ENCODE measurements at regions of chr20 and their contacts with region 1.

Region 1: DNA sequence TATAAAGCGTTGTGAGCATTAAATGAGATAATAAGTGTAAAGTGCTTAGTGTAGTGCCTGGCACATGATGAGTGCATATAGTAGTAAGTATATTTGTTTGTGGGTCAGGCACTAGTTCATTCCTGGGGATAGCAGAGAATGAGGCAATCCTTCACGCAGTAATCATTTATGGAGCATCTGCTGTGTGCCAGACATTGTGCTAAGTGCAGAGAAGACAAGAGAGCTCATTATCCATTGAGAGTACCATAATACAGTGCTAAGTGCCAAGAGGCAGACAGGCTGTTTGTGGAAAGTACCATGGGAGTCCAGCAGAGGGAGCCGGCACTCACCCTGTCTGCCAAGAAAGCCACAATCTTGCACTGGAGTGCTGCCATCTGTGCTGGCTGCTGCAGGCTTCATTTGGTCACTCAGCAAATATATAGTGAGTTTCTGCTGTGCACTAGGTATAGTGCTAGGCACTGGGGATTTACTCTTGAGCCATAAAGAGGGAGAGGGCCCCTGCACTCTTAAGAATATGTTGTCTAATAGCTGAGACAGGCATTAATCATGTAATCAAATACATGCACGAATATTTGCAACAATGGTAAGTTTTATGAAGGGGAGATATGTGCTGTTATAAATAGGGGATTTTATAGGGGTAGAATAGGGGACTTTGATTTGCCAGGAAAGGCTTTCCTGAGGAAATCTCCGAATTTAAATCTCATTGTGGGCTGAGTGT is 12.9 kb upstream of the MROH8 start:
- DNase-seq: peak; percentile 78
- H3K4me3 ChIP-seq: no peak overlapping the region
- H3K27ac ChIP-seq: no peak overlapping the region
- H3K4me1 ChIP-seq: peaks cover 4 to 5% of the 10 kb centered on the region in 2 experiments; a peak in 2 of 4 replicates
- H3K27me3 ChIP-seq: no peaks in the 10 kb centered on the region
- CTCF ChIP-seq: peak; percentile 85
- EP300 ChIP-seq: no peak
- RAD21 ChIP-seq: peak; percentile 71

Region 2: DNA sequence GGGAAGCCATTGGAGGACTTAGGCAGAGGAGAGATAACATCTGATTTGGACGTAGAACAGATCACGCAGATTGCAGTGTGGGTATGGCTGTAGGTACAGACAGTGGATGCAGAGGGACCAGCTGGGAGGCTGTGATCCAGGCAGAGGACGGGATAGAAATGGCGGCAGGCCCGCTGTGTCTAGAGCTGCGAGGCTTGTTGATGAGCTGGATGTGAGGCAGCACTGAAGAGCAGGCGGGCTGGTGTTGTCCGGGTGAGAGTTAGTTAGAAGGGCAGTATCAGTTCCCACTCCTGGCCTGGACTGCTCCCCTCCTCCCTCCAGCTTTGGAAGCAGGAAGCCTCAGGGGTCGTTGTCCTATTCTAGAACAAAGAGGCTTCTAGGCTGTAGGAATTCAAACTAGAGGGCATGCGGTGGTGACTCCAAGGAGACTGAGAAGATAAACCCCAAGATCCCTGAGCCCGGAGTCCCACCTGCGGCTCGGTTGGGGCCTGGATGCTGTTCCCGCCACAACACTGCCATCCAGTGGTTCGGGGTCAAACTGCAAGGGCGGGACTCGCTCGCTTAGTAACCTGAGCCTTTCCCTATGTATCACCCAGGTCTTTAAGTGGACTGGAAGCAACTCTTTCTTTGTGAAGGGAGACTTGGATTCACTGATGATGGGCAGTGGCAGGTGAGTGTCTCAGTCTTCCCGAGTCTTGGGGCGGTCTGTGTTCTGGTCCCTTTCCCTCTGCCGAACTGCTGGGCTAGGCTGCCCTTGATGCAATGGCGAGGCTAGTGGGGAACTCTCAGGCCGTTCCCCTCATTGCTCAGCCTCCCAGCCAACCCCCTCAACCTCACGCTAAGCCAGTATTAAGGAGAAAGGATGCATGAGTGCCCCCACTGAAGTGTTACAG is 305.2 kb before region 1 on chr20:
- CTCF ChIA-PET with region 1: no interaction called
- POLR2A ChIA-PET with region 1: no interaction called
- DNase-seq: peak; percentile 87
- H3K4me3 ChIP-seq: no peak overlapping the region; a peak in 1 of 4 replicates
- H3K27ac ChIP-seq: no peak overlapping the region
- H3K4me1 ChIP-seq: peaks cover 0 to 7% of the 10 kb centered on the region in 2 experiments; a peak in 2 of 4 replicates
- H3K27me3 ChIP-seq: no peaks in the 10 kb centered on the region
- CTCF ChIP-seq: peak; percentile 91
- EP300 ChIP-seq: no peak
- RAD21 ChIP-seq: peak; percentile 96

Region 3: DNA sequence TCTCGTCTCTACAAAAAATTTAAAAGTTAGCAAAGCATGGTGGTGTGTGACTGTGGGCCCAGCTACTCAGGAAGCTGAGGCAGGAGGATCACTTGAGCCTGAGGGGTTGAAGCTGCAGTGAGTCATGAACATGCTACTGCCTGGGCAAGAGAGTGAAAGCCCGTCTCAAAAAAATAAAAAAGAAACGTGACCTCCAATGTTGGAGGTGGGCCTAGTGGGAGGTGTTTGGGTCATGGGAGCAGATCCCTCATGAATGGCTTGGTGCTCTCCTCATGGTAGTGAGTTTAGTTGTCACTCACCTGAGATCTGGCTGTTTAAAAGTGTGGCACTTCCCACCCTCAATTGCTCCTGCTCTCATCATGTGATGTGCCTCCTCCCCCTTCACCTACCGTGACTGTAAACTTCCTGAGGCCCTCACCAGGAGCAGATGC is 120.8 kb before region 1 on chr20:
- CTCF ChIA-PET with region 1: no interaction called
- POLR2A ChIA-PET with region 1: no interaction called
- DNase-seq: no peak
- H3K4me3 ChIP-seq: no peak overlapping the region
- H3K27ac ChIP-seq: no peak overlapping the region
- H3K4me1 ChIP-seq: no peaks in the 10 kb centered on the region
- H3K27me3 ChIP-seq: no peaks in the 10 kb centered on the region
- CTCF ChIP-seq: no peak
- EP300 ChIP-seq: no peak
- RAD21 ChIP-seq: no peak

Region 4: GRCh38 chr20:37178839-37179670 is 13.2 kb before region 1 on chr20 and contains the starts of genes MROH8 and RPN2:
- CTCF ChIA-PET with region 1: interaction called, 43 read pairs
- POLR2A ChIA-PET with region 1: interaction called, 16 read pairs
- DNase-seq: peak; percentile 96
- H3K4me3 ChIP-seq: peak within 1 kb of the TSS; percentile 70 to 87
- H3K27ac ChIP-seq: peak within 1 kb of the TSS; percentile 93 to 98
- H3K4me1 ChIP-seq: peaks cover 0 to 9% of the 10 kb centered on the region in 2 experiments; a peak in 2 of 4 replicates
- H3K27me3 ChIP-seq: no peaks in the 10 kb centered on the region
- CTCF ChIP-seq: no peak
- EP300 ChIP-seq: peak in 1 of 2 experiments; percentile 45; a peak in 1 of 4 replicates
- RAD21 ChIP-seq: no peak
- polyA plus RNA-seq, gene MROH8: 3.2 and 3.5 TPM in 2 replicates
- polyA plus RNA-seq, gene RPN2: 420 and 596 TPM in 2 replicates

Region 5: GRCh38 chr20:37209661-37210314 is 17.5 kb after region 1 on chr20:
- CTCF ChIA-PET with region 1: interaction called, 13 read pairs
- POLR2A ChIA-PET with region 1: no interaction called
- DNase-seq: no peak
- H3K4me3 ChIP-seq: no peak overlapping the region
- H3K27ac ChIP-seq: no peak overlapping the region; a peak in 1 of 4 replicates
- H3K4me1 ChIP-seq: peaks cover 0 to 4% of the 10 kb centered on the region in 2 experiments; a peak in 1 of 4 replicates
- H3K27me3 ChIP-seq: no peaks in the 10 kb centered on the region
- CTCF ChIP-seq: no peak
- EP300 ChIP-seq: no peak
- RAD21 ChIP-seq: no peak

Region 6: DNA sequence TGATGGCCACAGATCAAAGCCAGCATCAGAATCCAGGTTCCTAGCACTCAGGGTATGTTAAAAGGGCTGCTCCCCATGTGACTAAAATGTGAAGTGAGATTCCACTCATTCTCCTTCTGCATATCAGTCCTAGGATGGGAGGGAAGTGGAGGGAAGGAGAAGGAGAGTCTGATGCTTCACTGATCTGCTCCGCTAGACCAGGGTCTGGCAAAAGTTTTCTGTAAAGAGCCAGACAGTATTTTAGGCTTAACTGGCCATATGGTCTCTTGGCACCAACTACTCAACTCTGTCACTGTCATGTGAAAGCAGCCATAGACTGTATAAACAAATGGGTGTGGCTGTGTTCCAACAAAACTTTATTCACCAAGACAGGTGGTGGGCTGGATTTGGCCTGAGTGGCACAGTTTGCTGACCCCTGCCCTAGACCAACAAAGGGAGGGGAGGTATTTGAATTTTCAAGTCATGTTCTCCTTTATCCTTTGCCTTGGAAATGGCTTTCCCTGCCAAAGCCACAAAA is 46.7 kb after region 1 on chr20:
- CTCF ChIA-PET with region 1: interaction called, 19 read pairs
- POLR2A ChIA-PET with region 1: no interaction called
- DNase-seq: no peak
- H3K4me3 ChIP-seq: no peak overlapping the region
- H3K27ac ChIP-seq: peak overlapping the region in 1 of 2 experiments; percentile 99; a peak in 2 of 4 replicates
- H3K4me1 ChIP-seq: peaks cover 0 to 70% of the 10 kb centered on the region in 2 experiments; a peak in 2 of 4 replicates
- H3K27me3 ChIP-seq: no peaks in the 10 kb centered on the region
- CTCF ChIP-seq: no peak
- EP300 ChIP-seq: peak in 1 of 2 experiments; percentile 45; a peak in 1 of 4 replicates
- RAD21 ChIP-seq: peak; percentile 15; the same call in 1 of the 2 replicates

Region 7: GRCh38 chr20:37384683-37385174 is 192.4 kb after region 1 on chr20:
- CTCF ChIA-PET with region 1: interaction called, 22 read pairs
- POLR2A ChIA-PET with region 1: no interaction called
- DNase-seq: peak; percentile 93
- H3K4me3 ChIP-seq: no peak overlapping the region; a peak in 1 of 4 replicates
- H3K27ac ChIP-seq: peak overlapping the region in 1 of 2 experiments; percentile 77; a peak in 2 of 4 replicates
- H3K4me1 ChIP-seq: peaks cover 0 to 18% of the 10 kb centered on the region in 2 experiments; a peak in 1 of 4 replicates
- H3K27me3 ChIP-seq: no peaks in the 10 kb centered on the region
- CTCF ChIP-seq: peak; percentile 75
- EP300 ChIP-seq: no peak
- RAD21 ChIP-seq: peak; percentile 68

Region 8: GRCh38 chr20:37519508-37520128 is 327.3 kb after region 1 on chr20:
- CTCF ChIA-PET with region 1: interaction called, 280 read pairs
- POLR2A ChIA-PET with region 1: no interaction called
- DNase-seq: peak; percentile 68
- H3K4me3 ChIP-seq: no peak overlapping the region
- H3K27ac ChIP-seq: peak overlapping the region in 1 of 2 experiments; percentile 6; a peak in 1 of 4 replicates
- H3K4me1 ChIP-seq: peaks cover 1 to 36% of the 10 kb centered on the region in 2 experiments; a peak in 2 of 4 replicates
- H3K27me3 ChIP-seq: no peaks in the 10 kb centered on the region
- CTCF ChIP-seq: no peak
- EP300 ChIP-seq: no peak
- RAD21 ChIP-seq: no peak

Region 9: DNA sequence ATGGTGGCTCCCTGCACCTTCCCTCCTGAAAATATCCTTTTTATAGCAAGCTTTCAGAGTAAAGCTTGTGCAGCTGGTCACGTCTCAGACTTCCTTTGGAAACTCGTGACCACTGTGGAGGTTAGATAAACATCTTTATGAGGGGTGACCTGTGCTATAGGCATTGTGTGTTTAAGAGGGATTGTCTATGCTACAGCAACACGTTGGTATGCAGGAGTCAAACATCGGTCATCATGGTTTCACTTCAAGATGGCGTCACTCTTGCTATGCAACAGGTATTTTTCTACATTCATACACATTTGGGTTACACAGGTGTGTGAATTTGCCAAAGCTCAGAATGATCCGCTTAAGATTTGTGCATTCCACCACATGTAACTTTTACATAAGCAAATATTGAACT is 350.0 kb after region 1 on chr20:
- CTCF ChIA-PET with region 1: interaction called, 21 read pairs
- POLR2A ChIA-PET with region 1: no interaction called
- DNase-seq: no peak
- H3K4me3 ChIP-seq: no peak overlapping the region
- H3K27ac ChIP-seq: no peak overlapping the region
- H3K4me1 ChIP-seq: no peaks in the 10 kb centered on the region
- H3K27me3 ChIP-seq: peaks cover 7% of the 10 kb centered on the region; the same call in 1 of the 2 replicates
- CTCF ChIP-seq: no peak
- EP300 ChIP-seq: no peak
- RAD21 ChIP-seq: no peak

Region 10: DNA sequence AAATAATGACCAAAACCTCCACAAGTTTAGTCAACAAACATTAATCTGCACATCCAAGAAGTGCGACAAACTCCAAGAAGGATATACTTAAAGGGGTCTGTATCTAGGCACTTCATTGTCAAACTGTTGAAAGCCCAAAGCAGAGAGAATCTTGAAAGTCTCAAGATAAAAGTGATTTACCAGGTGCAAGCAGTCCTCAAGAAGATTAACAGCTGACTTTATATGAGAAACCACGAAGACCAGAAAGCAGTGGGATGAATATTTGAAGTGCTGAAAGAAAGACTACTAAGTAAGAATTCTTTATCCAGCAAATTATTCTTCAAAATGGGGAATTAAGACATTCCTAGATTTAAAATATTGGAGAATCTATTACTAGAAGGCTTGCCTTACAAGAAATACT is 393.8 kb after region 1 on chr20:
- CTCF ChIA-PET with region 1: no interaction called
- POLR2A ChIA-PET with region 1: no interaction called
- DNase-seq: no peak
- H3K4me3 ChIP-seq: no peak overlapping the region
- H3K27ac ChIP-seq: no peak overlapping the region
- H3K4me1 ChIP-seq: peaks cover 0 to under 1% of the 10 kb centered on the region in 2 experiments; a peak in 1 of 4 replicates
- H3K27me3 ChIP-seq: peaks cover 7% of the 10 kb centered on the region; the same call in 1 of the 2 replicates
- CTCF ChIP-seq: no peak
- EP300 ChIP-seq: no peak
- RAD21 ChIP-seq: no peak

Measured in SK-N-SH (cell line).